Gastrocnemius medialis (tissue), 4 donors: ENCODE measurements at regions of chr3 and their contacts with region 1.

Region 1: GRCh38 chr3:64685800-64686445 is 1.9 kb downstream of the ADAMTS9 start:
- DNase-seq: peak; percentile 84 to 92
- ATAC-seq: peak; percentile 76 to 78
- H3K4me3 ChIP-seq: peak overlapping the region; percentile 56 to 95 (median 88)
- H3K27ac ChIP-seq: peak overlapping the region; percentile 90 to 97 (median 93)
- H3K4me1 ChIP-seq: peaks cover 0 to 15% of the 10 kb centered on the region in 2 donors
- H3K27me3 ChIP-seq: no peaks in the 10 kb centered on the region
- CTCF ChIP-seq: peak in 3 of 5 experiments; percentile 49 to 62 (median 52)
- POLR2A ChIP-seq: peak; percentile 80 to 91

Region 2: GRCh38 chr3:64533617-64534317 is 152.2 kb before region 1 on chr3:
- in situ Hi-C with region 1: no loop called
- intact Hi-C with region 1: loop called (anchors 2 kb)
- DNase-seq: peak; percentile 82
- ATAC-seq: peak; percentile 96 to 98
- H3K4me3 ChIP-seq: peak overlapping the region in 2 of 4 donors; percentile 20 to 44
- H3K27ac ChIP-seq: peak overlapping the region in 3 of 4 donors; percentile 50 to 65 (median 60)
- H3K4me1 ChIP-seq: peaks cover 6% of the 10 kb centered on the region in 2 donors
- H3K27me3 ChIP-seq: no peaks in the 10 kb centered on the region
- CTCF ChIP-seq: peak; percentile 76 to 92 (median 86)
- POLR2A ChIP-seq: no peak

Region 3: DNA sequence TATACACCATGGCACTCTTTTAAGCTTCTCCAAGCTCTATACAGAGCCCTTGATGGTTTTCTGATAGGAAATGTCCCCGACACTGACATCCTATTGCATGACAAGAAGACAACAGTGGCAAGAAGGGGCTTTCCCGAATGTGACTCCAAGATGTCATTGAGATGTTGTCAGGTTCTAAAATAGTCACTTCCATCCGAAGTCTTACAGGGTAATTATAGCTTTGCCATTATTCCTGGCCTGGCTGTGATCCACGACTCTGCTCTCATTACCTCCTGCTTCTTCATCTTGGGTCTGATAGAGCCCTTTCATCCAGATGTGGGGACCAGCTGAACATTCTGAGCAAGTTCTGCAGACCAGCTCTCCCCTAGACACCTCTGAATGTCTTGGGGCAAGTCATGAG is 42.5 kb after region 1 on chr3:
- in situ Hi-C with region 1: no loop called
- intact Hi-C with region 1: loop called (anchors 1 kb)
- DNase-seq: peak; percentile 42 to 48
- ATAC-seq: peak; percentile 88 to 91
- H3K4me3 ChIP-seq: no peak overlapping the region
- H3K27ac ChIP-seq: peak overlapping the region; percentile 32 to 77 (median 60)
- H3K4me1 ChIP-seq: peaks cover 17 to 30% of the 10 kb centered on the region in 2 donors
- H3K27me3 ChIP-seq: no peaks in the 10 kb centered on the region
- CTCF ChIP-seq: no peak
- POLR2A ChIP-seq: no peak

Region 4: GRCh38 chr3:64815195-64815631 is 129.3 kb after region 1 on chr3:
- in situ Hi-C with region 1: no loop called
- intact Hi-C with region 1: loop called (anchors 2 kb)
- DNase-seq: no peak
- ATAC-seq: peak; percentile 34 to 52
- H3K4me3 ChIP-seq: no peak overlapping the region
- H3K27ac ChIP-seq: peak overlapping the region; percentile 40 to 80 (median 67)
- H3K4me1 ChIP-seq: peaks cover 24 to 33% of the 10 kb centered on the region in 2 donors
- H3K27me3 ChIP-seq: no peaks in the 10 kb centered on the region
- CTCF ChIP-seq: no peak
- POLR2A ChIP-seq: no peak

Region 5: DNA sequence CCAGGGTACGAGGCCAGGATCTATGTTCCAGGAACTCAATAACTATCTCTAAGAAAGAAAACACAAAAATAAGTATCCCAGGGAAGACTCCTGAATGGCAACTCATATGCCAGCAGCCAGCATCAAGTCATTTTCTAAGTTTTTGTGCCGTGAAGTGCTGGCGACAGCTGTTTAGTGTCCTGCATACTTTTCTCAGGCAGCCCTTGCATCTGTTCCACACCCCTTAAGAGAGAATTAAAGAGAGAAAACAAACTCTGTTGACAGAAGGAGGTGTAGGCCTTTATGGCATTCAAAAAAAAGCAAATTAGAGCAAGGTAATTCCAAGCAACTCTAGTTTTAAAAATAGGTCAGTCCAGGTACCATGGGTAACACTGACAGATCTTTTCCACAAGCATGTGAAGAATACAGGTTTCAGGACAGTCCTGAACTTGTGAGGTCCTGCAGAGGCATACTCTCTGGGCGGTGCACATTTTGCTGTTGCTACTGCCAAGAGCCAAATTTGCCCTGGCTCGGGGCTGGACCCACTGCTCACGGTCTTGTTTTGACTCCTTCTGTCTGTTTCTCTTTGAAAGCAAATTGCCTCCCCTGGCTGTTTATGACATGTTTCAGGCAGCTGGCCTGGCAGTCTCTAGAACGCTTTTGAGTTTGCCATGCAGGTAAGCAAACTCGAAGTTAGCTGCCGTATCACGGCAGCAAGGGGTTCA is 254.0 kb after region 1 on chr3:
- in situ Hi-C with region 1: no loop called
- intact Hi-C with region 1: loop called (anchors 5 kb)
- DNase-seq: no peak
- ATAC-seq: no peak
- H3K4me3 ChIP-seq: no peak overlapping the region
- H3K27ac ChIP-seq: peak overlapping the region in 1 of 4 donors; percentile 26
- H3K4me1 ChIP-seq: peaks cover 17 to 28% of the 10 kb centered on the region in 2 donors
- H3K27me3 ChIP-seq: no peaks in the 10 kb centered on the region
- CTCF ChIP-seq: no peak
- POLR2A ChIP-seq: no peak

Region 6: GRCh38 chr3:65412588-65412987 is 726.7 kb after region 1 on chr3:
- in situ Hi-C with region 1: loop called in 1 of 4 experiments (anchors 25 kb)
- intact Hi-C with region 1: loop called (anchors 1 kb)
- DNase-seq: peak; percentile 59 to 68
- ATAC-seq: peak; percentile 91 to 98
- H3K4me3 ChIP-seq: no peak overlapping the region
- H3K27ac ChIP-seq: peak overlapping the region in 2 of 4 donors; percentile 14 to 56
- H3K4me1 ChIP-seq: peaks cover 18 to 47% of the 10 kb centered on the region in 2 donors
- H3K27me3 ChIP-seq: no peaks in the 10 kb centered on the region
- CTCF ChIP-seq: peak in 4 of 5 experiments; percentile 25 to 48 (median 40)
- POLR2A ChIP-seq: no peak